Left ventricle myocardium superior (tissue), 1 donor: ENCODE measurements at regions of chr11 and their contacts with region 1.

Region 1: GRCh38 chr11:113137713-113138529 is 176.5 kb upstream of the TTC12 start:
- DNase-seq: no peak
- ATAC-seq: no peak

Region 2: DNA sequence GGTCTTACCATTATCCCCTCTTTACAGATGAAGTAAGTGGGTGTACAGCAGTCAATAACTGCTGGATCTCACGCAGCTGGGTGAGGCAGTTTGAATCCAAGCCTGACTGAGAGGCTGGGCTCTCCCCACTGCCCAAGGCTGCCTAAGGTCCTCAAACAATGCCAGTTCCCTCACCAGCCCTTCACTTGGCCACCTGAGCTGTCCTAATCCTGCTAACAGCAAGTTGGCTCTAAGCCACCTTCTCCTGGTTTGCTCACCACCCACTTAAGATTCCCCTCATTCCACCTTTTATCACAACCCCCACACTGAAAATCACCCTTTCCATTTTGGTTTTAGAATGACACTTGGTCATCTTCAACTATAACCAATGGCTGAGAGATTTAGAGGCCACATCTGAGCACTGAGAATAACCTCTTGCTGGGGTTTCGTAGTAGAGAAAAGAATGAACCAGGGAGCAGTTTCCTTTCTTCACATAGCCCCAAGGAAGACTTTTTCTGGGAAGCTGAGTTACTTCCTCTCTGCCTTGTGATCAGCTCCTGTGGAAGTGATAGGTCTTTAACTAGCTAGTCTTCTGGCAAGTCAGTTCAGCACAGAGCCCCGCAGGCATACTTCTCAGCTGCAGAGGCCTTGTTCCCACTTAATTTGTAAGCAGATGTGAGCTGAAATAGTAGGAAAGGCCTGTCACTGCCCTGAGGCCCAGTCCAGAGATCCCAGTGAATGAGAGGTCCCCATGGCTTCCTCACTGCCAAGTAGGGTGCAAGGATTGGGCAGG is 118.7 kb after region 1 on chr11:
- intact Hi-C with region 1: loop called (anchors 10 kb)
- DNase-seq: peak; percentile 57
- ATAC-seq: peak; percentile 89